Right cardiac atrium (tissue), 5 donors: ENCODE measurements at regions of chr9 and their contacts with region 1.

Region 1: GRCh38 chr9:132240753-132241493 is 79.1 kb downstream of the NTNG2 start:
- DNase-seq: peak; percentile 98 to 100 (median 99)
- ATAC-seq: peak; percentile 95
- H3K4me3 ChIP-seq: peak overlapping the region; percentile 91
- H3K27ac ChIP-seq: no peak overlapping the region
- H3K4me1 ChIP-seq: no peaks in the 10 kb centered on the region
- H3K27me3 ChIP-seq: no peaks in the 10 kb centered on the region

Region 2: DNA sequence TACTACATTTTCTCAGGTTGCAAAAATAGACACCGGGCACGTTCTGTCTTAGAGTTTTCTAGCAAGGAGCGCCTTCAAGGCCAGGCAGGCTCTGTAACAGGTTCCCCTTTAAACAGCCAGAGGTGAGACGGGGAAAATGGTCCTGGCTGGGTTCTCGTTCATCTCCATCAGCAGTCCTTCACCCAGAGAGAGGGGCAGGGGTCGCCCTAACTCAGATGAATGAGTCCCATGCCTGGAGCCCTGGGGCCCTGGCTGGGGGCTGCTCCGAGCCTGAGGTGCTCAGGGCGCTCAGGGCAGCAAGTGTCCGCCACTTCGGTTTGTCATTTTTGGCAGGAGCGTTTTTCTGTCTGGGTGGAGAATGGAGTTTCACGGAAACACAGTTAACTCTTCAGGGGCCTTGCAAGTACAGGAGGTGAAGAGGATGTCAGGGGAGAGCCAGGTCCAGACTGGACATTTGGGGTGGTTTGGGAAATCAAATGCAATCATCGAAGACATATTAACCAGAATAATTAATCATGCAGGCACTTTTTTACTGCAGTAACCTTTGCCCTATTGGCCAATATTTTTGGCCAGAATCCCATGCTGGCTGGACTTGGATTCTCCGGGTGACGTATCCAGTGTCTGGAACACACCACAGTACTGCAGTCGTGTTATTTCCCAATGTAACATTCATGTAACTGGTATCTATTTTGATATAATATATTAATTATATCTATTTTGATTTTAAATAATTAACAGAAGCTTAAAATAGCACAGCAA is 76.1 kb before region 1 on chr9:
- intact Hi-C with region 1: loop called in 2 of 4 experiments (anchors 2 to 5 kb)
- DNase-seq: peak in 1 of 3 donors; percentile 68
- ATAC-seq: peak; percentile 34 to 59
- H3K4me3 ChIP-seq: no peak overlapping the region
- H3K27ac ChIP-seq: peak overlapping the region; percentile 50
- H3K4me1 ChIP-seq: peaks cover 2% of the 10 kb centered on the region
- H3K27me3 ChIP-seq: no peaks in the 10 kb centered on the region

Region 3: GRCh38 chr9:132367613-132368313 is 126.8 kb after region 1 on chr9:
- intact Hi-C with region 1: no loop called
- DNase-seq: no peak
- ATAC-seq: peak in 1 of 2 donors; percentile 54
- H3K4me3 ChIP-seq: no peak overlapping the region
- H3K27ac ChIP-seq: no peak overlapping the region
- H3K4me1 ChIP-seq: no peaks in the 10 kb centered on the region
- H3K27me3 ChIP-seq: no peaks in the 10 kb centered on the region